Adrenal gland (tissue), 19 donors: ENCODE measurements at regions of chr17 and their contacts with region 1.

Region 1: GRCh38 chr17:47978324-47978723 is 7.4 kb downstream of the CDK5RAP3 start:
- DNase-seq: peak; percentile 40 to 83 (median 60)
- H3K4me3 ChIP-seq: no peak overlapping the region
- H3K27ac ChIP-seq: no peak overlapping the region
- H3K4me1 ChIP-seq: peaks cover 0 to 3% of the 10 kb centered on the region in 2 donors
- H3K27me3 ChIP-seq: no peaks in the 10 kb centered on the region
- CTCF ChIP-seq: peak; percentile 50 to 73 (median 65)
- POLR2A ChIP-seq: no peak

Region 2: GRCh38 chr17:48011405-48012150 is 33.3 kb after region 1 on chr17:
- intact Hi-C with region 1: loop called in 1 of 2 experiments (anchors 5 kb)
- DNase-seq: peak in 3 of 7 donors; percentile 43 to 76 (median 47)
- H3K4me3 ChIP-seq: peak overlapping the region in 1 of 4 donors; percentile 38
- H3K27ac ChIP-seq: peak overlapping the region in 1 of 5 donors; percentile 60
- H3K4me1 ChIP-seq: peaks cover 4 to 6% of the 10 kb centered on the region in 2 donors
- H3K27me3 ChIP-seq: peaks cover 3% of the 10 kb centered on the region
- CTCF ChIP-seq: peak; percentile 11 to 45 (median 34)
- POLR2A ChIP-seq: no peak

Region 3: GRCh38 chr17:48413613-48414405 is 435.5 kb after region 1 on chr17:
- intact Hi-C with region 1: no loop called
- DNase-seq: no peak
- H3K4me3 ChIP-seq: no peak overlapping the region
- H3K27ac ChIP-seq: no peak overlapping the region
- H3K4me1 ChIP-seq: no peaks in the 10 kb centered on the region
- H3K27me3 ChIP-seq: no peaks in the 10 kb centered on the region
- CTCF ChIP-seq: no peak
- POLR2A ChIP-seq: no peak